Heart left ventricle (tissue), 16 donors: ENCODE measurements at regions of chr13 and their contacts with region 1.

Region 1: DNA sequence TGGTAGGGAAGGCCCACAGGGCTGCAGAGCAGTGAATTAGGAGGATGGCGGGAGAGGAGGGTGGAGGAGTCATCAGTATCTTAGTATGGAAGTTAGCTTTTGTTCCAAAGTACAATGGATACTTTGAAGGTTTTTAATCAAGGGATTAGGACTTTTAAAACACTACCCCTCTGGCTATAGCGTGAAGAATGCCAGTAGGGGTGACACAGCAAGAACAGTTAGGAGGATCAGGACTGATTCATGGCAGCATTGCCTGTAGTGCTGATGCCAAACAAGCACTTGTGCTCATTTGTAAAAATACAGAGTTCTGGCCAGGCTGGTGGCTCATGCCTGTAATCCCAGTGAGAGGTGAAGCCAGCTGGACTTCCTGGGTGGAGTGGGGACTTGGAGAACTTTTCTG is 46.2 kb downstream of the SKA3 start:
- DNase-seq: no peak
- ATAC-seq: no peak
- H3K4me3 ChIP-seq: no peak overlapping the region
- H3K27ac ChIP-seq: no peak overlapping the region
- H3K4me1 ChIP-seq: no peaks in the 10 kb centered on the region
- H3K27me3 ChIP-seq: no peaks in the 10 kb centered on the region
- CTCF ChIP-seq: no peak
- POLR2A ChIP-seq: no peak

Region 2: GRCh38 chr13:20331419-20331818 is 798.7 kb before region 1 on chr13:
- intact Hi-C with region 1: no loop called
- DNase-seq: no peak
- ATAC-seq: no peak
- H3K4me3 ChIP-seq: no peak overlapping the region
- H3K27ac ChIP-seq: no peak overlapping the region
- H3K4me1 ChIP-seq: peaks cover 0 to 7% (median 0%) of the 10 kb centered on the region in 12 donors
- H3K27me3 ChIP-seq: no peaks in the 10 kb centered on the region
- CTCF ChIP-seq: no peak
- POLR2A ChIP-seq: no peak

Region 3: DNA sequence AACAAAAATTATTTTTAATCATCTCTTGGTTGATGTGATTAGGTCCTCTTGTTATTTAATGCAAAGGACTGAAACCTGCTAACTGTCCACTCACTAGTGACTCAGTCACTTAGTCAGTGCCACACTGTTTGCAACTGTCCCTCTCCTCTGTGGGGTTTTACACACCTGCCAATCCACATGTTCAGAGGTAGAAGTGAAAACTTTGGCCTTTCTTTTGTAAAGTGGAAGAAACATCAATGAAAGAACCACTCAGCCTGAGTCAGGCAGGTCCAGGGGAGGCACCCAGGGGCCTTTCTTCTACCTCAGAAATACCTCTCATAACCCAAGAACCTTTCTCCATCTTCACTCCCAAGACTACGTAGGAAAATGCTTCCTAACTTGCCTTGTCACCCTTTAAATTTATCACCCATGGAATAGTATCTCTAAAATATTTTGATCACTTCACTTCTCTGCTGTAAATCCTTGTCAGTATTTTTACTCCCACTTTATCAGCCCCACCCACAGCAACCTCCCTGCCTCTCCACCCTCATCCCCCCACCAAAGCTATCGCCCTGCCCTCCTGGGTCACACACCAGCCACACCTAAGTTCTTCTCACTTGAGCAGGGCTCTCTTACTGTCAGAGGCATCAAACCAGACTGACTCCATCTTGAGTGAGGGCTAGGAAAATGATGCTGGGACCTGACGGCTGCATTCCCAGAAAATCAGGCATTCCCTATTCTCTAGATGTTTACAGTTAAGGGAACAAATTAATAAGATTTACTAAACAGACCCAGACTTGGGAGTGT is 326.7 kb before region 1 on chr13:
- intact Hi-C with region 1: no loop called
- DNase-seq: no peak
- ATAC-seq: no peak
- H3K4me3 ChIP-seq: no peak overlapping the region
- H3K27ac ChIP-seq: no peak overlapping the region
- H3K4me1 ChIP-seq: peaks cover 0 to 12% (median 0%) of the 10 kb centered on the region in 12 donors
- H3K27me3 ChIP-seq: no peaks in the 10 kb centered on the region
- CTCF ChIP-seq: no peak
- POLR2A ChIP-seq: no peak

Region 4: GRCh38 chr13:20945952-20946383 is 184.1 kb before region 1 on chr13:
- intact Hi-C with region 1: loop called in 8 of 10 experiments (anchors 2 to 10 kb)
- DNase-seq: peak in 3 of 5 donors; percentile 20 to 42 (median 23)
- ATAC-seq: peak in 3 of 4 donors; percentile 37 to 46 (median 38)
- H3K4me3 ChIP-seq: peak overlapping the region in 9 of 12 donors; percentile 10 to 40 (median 28)
- H3K27ac ChIP-seq: no peak overlapping the region
- H3K4me1 ChIP-seq: peaks cover 0 to 15% (median 2%) of the 10 kb centered on the region in 12 donors
- H3K27me3 ChIP-seq: peaks cover 0 to 14% (median 4%) of the 10 kb centered on the region in 9 donors
- CTCF ChIP-seq: no peak
- POLR2A ChIP-seq: no peak